Activated CD8-positive, alpha-beta T cell treated with anti-CD3 and anti-CD28 coated beads, Interleukin-2, amount 10 ng/mL, durations not matched to agents 7 days and 5 days (primary cell): ENCODE measurements at regions of chr7 and their contacts with region 1.

Region 1: GRCh38 chr7:24907311-24907886 is 72.6 kb downstream of the OSBPL3 start:
- DNase-seq: peak; percentile 55
- ATAC-seq: peak; percentile 71
- H3K4me3 Mint-ChIP-seq: no peak overlapping the region
- H3K27ac Mint-ChIP-seq: no peak overlapping the region
- H3K4me1 Mint-ChIP-seq: peaks cover 41% of the 10 kb centered on the region
- H3K27me3 Mint-ChIP-seq: no peaks in the 10 kb centered on the region

Region 2: GRCh38 chr7:24921362-24921679 is 13.9 kb after region 1 on chr7:
- CTCF ChIA-PET with region 1: interaction called, 22 read pairs
- POLR2A ChIA-PET with region 1: interaction called, 12 read pairs
- DNase-seq: peak; percentile 53
- ATAC-seq: peak; percentile 59
- H3K4me3 Mint-ChIP-seq: peak overlapping the region; percentile 58
- H3K27ac Mint-ChIP-seq: peak overlapping the region; percentile 94
- H3K4me1 Mint-ChIP-seq: peaks cover 93% of the 10 kb centered on the region
- H3K27me3 Mint-ChIP-seq: no peaks in the 10 kb centered on the region

Region 3: GRCh38 chr7:24926623-24927524 is 19.5 kb after region 1 on chr7:
- CTCF ChIA-PET with region 1: interaction called, 22 read pairs
- POLR2A ChIA-PET with region 1: interaction called, 5 read pairs
- DNase-seq: no peak
- ATAC-seq: no peak
- H3K4me3 Mint-ChIP-seq: no peak overlapping the region
- H3K27ac Mint-ChIP-seq: no peak overlapping the region
- H3K4me1 Mint-ChIP-seq: peaks cover 73% of the 10 kb centered on the region
- H3K27me3 Mint-ChIP-seq: no peaks in the 10 kb centered on the region